ENCODE measurements at regions of chrX and their contacts with region 1.

Region 1: GRCh38 chrX:41259516-41259915 is 74.4 kb upstream of the DDX3X start:
- DNase-seq: no peak
- H3K4me3 ChIP-seq: no peak overlapping the region
- H3K27ac ChIP-seq: no peak overlapping the region
- H3K4me1 ChIP-seq: no peaks in the 10 kb centered on the region
- H3K27me3 ChIP-seq: no peaks in the 10 kb centered on the region
- CTCF ChIP-seq: no peak

Region 2: GRCh38 chrX:40877887-40878286 is 381.6 kb before region 1 on chrX:
- CTCF ChIA-PET with region 1: no interaction called
- dilution Hi-C with region 1: no loop called
- in situ Hi-C with region 1: no loop called
- intact Hi-C with region 1: loop called (anchors 10 kb)
- DNase-seq: peak; percentile 9
- H3K4me3 ChIP-seq: no peak overlapping the region
- H3K27ac ChIP-seq: no peak overlapping the region
- H3K4me1 ChIP-seq: no peaks in the 10 kb centered on the region
- H3K27me3 ChIP-seq: peaks cover 3% of the 10 kb centered on the region
- CTCF ChIP-seq: peak; percentile 28 to 59

Region 3: GRCh38 chrX:42485621-42486020 is 1226.1 kb after region 1 on chrX:
- CTCF ChIA-PET with region 1: no interaction called
- dilution Hi-C with region 1: no loop called
- in situ Hi-C with region 1: no loop called
- intact Hi-C with region 1: no loop called
- DNase-seq: no peak
- H3K4me3 ChIP-seq: no peak overlapping the region
- H3K27ac ChIP-seq: no peak overlapping the region
- H3K4me1 ChIP-seq: no peaks in the 10 kb centered on the region
- H3K27me3 ChIP-seq: no peaks in the 10 kb centered on the region
- CTCF ChIP-seq: no peak

Measured in mammary epithelial cell (primary cell).